ENCODE measurements at regions of chrX and their contacts with region 1.

Region 1: DNA sequence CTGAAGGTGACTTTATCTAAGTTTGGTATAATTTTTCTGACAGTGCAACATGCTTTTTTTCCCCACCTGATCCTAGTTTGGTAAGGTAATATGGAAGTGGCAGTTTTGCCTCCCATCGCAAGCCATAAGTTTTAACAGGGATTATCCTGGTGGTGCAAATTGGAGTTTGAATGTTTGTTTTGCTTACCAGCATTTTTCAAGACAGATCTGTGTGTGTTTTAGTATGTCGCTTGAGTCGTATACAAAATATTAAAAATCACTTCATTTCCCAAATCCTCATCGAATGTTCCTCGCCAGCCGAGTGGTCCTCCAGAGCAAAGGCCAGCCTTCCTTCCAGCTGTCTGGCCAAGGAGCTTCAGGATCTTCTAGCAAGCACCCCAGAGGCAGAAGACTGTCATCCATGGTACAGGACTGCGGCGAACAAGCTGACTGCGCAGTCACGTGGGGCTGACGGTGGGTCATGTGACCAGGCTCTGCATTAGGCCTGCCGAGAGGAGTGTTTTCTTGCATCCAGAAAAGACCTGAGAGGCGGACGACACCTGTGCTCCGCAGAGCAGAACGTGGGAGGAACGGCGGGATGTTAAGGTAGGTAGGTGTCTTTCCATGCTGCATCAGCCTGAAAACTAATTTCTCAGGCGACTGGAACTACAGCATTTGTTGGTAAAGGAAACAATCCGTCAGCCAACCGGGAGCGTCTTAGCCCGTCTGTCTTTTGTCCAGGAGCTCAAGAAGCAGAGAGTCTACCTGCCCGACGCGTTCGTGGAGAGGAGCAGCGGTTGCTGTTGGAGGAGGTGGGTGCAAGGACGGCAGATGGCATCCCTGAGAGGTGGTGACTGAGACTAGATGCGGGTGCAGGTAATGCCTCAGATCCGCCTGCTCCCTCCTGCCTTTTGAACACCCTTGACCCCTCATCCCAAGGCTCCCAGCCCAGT is at the start of gene GPRASP3:
- DNase-seq: no peak
- H3K4me3 ChIP-seq: peak within 1 kb of the TSS; percentile 61
- H3K27me3 ChIP-seq: no peaks in the 10 kb centered on the region
- CTCF ChIP-seq: no peak
- polyA plus RNA-seq, gene GPRASP3: 1.9 and 3.2 TPM in 2 replicates

Region 2: GRCh38 chrX:102604327-102604726 is 116.2 kb before region 1 on chrX:
- CTCF ChIA-PET with region 1: no interaction called
- POLR2A ChIA-PET with region 1: interaction called, 10 read pairs
- DNase-seq: no peak
- H3K4me3 ChIP-seq: no peak overlapping the region
- H3K27me3 ChIP-seq: no peaks in the 10 kb centered on the region
- CTCF ChIP-seq: no peak

Region 3: DNA sequence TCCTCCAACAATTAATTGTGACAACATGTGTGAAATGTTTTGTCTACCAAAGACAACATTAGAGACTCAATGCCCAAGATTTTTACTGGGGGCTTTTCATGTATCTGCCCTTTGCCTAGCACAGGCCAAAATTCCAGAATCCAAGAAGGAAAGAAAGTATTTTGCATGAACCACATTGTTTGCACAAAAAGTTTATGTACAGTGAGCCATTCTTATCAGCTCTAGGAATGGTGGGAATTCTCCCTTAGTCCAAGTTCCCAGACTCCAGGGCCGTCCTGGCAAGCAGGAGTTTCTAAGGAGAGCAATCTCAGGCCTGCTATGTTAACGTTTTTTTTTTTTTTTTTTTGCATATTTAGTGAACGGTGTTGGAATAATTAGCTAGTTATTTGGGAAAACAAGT is 47.6 kb before region 1 on chrX:
- CTCF ChIA-PET with region 1: no interaction called
- POLR2A ChIA-PET with region 1: no interaction called
- DNase-seq: no peak
- H3K4me3 ChIP-seq: no peak overlapping the region
- H3K27me3 ChIP-seq: no peaks in the 10 kb centered on the region
- CTCF ChIP-seq: no peak